Ascending aorta (tissue), 2 donors: ENCODE measurements at regions of chr11 and their contacts with region 1.

Region 1: DNA sequence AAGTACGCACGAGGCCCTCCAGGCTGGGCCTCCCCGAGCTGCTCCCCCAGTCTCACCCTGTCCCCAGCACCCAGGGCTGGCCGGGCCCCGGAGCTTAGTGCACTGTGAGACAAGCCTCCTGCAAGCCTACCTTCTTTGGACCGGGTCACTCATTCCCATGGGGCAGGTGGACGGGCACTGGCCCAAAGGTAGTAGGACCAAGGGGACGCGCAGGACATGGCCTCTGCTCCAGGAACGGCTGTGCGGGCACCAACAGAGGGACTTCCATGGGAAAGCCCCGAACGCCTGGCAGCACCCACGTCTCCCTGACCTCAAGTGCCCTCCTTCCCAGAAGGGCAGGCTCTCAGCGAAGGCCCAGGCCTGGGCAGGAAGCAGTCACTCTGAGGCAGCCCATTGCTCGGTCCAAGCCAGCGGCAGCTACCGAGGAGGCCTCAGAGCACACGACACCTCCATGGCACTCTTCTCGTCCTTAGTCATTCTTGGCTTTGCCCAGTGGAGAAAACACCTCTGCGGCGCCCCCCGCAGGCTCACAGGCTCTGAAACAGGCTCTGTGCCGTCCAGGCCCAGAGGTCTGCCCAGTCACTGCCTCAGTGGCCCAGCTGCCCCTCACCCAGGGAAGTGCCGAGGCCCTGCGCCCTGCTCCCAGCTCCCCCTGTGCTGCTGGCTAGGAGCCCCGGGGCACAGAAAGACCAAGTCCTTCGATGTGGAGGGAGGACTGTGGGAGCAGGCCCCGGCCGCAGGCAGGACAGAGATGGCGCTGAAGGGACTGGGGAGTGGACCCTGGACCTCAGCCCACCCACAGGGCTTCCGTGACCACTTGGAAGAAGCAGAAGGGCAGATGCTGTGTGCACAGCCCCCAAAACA is 3.8 kb downstream of the MOB2 start:
- DNase-seq: peak; percentile 30 to 83
- H3K4me3 ChIP-seq: peak overlapping the region in 1 of 2 donors; percentile 62
- H3K27ac ChIP-seq: peak overlapping the region; percentile 87 to 98
- H3K4me1 ChIP-seq: peaks cover 50 to 83% of the 10 kb centered on the region in 2 donors
- H3K27me3 ChIP-seq: no peaks in the 10 kb centered on the region
- CTCF ChIP-seq: peak; percentile 22 to 46 (median 31)

Region 2: DNA sequence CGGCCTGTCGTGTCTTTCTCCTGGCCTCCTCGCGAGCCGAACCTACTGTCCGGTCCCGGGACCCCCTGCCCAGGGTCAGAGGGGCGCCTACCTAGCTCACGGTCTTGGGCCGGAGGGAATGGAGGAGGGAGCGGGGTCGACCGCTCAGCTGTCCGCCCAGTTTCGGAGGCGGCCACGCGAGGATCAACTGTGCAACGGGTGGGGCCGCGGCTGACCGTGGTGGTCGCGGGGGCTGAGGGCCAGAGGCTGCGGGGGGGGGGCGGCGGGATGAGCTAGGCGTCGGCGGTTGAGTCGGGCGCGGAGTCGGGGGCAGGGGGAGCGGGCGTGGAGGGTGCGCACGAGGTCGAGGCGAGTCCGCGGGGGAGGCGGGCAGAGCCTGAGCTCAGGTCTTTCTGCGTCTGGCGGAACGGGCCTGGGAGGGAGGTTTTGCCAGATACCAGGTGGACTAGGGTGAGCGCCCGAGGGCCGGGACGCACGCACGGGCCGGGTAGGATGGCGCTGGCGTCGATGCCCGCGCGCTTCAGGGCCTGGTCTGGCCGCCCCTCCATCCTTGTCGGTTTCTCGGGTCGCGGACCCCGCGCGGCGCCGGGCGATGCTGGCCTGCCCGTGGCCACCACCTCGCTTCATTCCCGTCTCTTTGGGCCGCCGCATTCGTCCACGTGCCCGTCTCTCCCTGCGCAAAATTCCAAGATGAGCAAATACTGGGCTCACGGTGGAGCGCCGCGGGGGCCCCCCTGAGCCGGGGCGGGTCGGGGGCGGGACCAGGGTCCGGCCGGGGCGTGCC is 846.2 kb before region 1 on chr11:
- intact Hi-C with region 1: no loop called
- DNase-seq: no peak
- H3K4me3 ChIP-seq: peak overlapping the region; percentile 37 to 59
- H3K27ac ChIP-seq: no peak overlapping the region
- H3K4me1 ChIP-seq: peaks cover 9% of the 10 kb centered on the region in 2 donors
- H3K27me3 ChIP-seq: no peaks in the 10 kb centered on the region
- CTCF ChIP-seq: no peak

Region 3: GRCh38 chr11:1411301-1411700 is 71.5 kb before region 1 on chr11:
- intact Hi-C with region 1: no loop called
- DNase-seq: no peak
- H3K4me3 ChIP-seq: no peak overlapping the region
- H3K27ac ChIP-seq: no peak overlapping the region
- H3K4me1 ChIP-seq: no peaks in the 10 kb centered on the region
- H3K27me3 ChIP-seq: no peaks in the 10 kb centered on the region
- CTCF ChIP-seq: no peak

Region 4: GRCh38 chr11:1458340-1459218 is 24.2 kb before region 1 on chr11:
- intact Hi-C with region 1: loop called (anchors 1 kb)
- DNase-seq: peak in 1 of 2 donors; percentile 86
- H3K4me3 ChIP-seq: no peak overlapping the region
- H3K27ac ChIP-seq: peak overlapping the region; percentile 86 to 89
- H3K4me1 ChIP-seq: peaks cover 14 to 28% of the 10 kb centered on the region in 2 donors
- H3K27me3 ChIP-seq: no peaks in the 10 kb centered on the region
- CTCF ChIP-seq: peak; percentile 15 to 41 (median 32)

Region 5: GRCh38 chr11:1502954-1503707 is 20.3 kb after region 1 on chr11:
- intact Hi-C with region 1: loop called (anchors 1 kb)
- DNase-seq: no peak
- H3K4me3 ChIP-seq: peak overlapping the region; percentile 8 to 35
- H3K27ac ChIP-seq: peak overlapping the region; percentile 68 to 86
- H3K4me1 ChIP-seq: peaks cover 34 to 69% of the 10 kb centered on the region in 2 donors
- H3K27me3 ChIP-seq: no peaks in the 10 kb centered on the region
- CTCF ChIP-seq: no peak